AG04450 (cell line): ENCODE measurements at regions of chr1 and their contacts with region 1.

Region 1: DNA sequence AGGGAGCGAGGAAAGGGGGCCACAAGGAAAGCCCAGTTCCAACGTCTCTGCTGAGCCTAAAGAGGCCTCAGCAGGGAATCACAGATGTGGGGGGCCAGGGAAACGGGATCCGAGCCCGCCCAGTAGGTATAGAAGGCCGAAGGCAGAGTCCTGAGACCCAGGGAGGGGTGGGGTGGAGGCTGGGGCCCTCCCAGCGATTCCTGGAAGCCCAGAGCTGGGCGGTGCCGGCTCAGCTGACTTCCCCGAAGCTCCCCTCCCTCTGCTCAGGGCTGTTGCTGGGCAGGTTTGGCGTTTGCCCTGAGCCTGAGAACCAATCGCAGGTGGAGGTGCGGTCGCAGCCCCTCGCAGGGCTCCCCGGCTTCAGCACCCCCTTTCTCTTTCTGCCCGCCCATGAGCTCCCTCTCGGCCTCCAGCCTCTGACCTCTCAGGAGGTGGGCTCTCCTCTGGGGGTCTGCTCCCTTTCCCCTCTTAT is 12.8 kb downstream of the ADAMTSL4 start:
- DNase-seq: peak; percentile 81
- H3K4me3 ChIP-seq: peak overlapping the region; percentile 67
- H3K27ac ChIP-seq: peak overlapping the region; percentile 100
- H3K27me3 ChIP-seq: no peaks in the 10 kb centered on the region
- CTCF ChIP-seq: no peak

Region 2: GRCh38 chr1:150376110-150376509 is 185.9 kb before region 1 on chr1:
- CTCF ChIA-PET with region 1: no interaction called
- POLR2A ChIA-PET with region 1: no interaction called
- DNase-seq: no peak
- H3K4me3 ChIP-seq: no peak overlapping the region
- H3K27ac ChIP-seq: no peak overlapping the region
- H3K27me3 ChIP-seq: no peaks in the 10 kb centered on the region
- CTCF ChIP-seq: no peak

Region 3: GRCh38 chr1:150537732-150538684 is 24.0 kb before region 1 on chr1:
- CTCF ChIA-PET with region 1: interaction called, 39 read pairs
- POLR2A ChIA-PET with region 1: no interaction called
- DNase-seq: peak; percentile 42
- H3K4me3 ChIP-seq: no peak overlapping the region
- H3K27ac ChIP-seq: peak overlapping the region; percentile 73
- H3K27me3 ChIP-seq: no peaks in the 10 kb centered on the region
- CTCF ChIP-seq: no peak

Region 4: DNA sequence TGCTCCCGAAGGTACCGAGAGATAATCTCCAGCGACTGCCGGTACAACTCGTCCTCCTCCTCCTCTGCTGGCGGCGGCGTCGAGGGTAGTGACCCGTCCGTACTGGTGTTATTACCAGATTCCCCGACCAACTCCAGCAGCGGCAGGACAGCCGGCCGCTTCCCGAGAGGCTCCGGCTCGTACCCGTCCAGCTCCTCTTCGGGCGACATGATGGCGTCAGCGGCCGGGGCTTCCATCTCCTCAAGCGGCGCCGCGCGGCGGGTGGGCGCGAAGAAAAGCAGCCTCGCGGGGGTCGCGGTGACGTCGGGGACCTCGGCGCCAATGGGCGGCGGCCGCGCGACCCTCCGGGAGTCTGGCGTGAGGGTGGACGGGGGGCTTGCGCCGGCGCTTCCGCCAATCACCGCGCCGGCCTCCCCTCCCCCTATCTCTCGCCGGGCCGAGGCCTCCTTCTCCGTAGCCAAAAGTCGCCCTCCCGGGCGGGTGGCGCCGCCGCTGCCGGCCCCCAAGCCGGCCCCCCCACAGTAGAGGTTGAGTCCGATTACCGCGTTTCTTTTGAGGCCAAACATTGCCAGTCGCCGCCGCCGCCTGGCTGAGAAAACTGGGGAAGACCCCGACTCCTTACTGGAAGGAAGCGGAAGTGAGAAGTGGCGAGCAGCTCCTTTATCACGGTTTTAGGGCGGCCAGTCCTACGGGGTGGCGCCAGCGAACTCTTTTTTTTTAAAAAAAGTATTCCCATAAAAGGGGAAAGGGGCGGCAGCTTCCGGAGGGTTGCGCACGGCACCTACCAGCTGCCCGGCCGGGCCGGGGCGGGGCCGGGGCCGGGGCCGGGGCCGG is 17.2 kb after region 1 on chr1 and contains the start of gene MCL1:
- CTCF ChIA-PET with region 1: interaction called, 59 read pairs
- POLR2A ChIA-PET with region 1: interaction called, 130 read pairs
- DNase-seq: peak; percentile 91
- H3K4me3 ChIP-seq: peak within 1 kb of the TSS; percentile 97
- H3K27ac ChIP-seq: peak within 1 kb of the TSS; percentile 95
- H3K27me3 ChIP-seq: no peaks in the 10 kb centered on the region
- CTCF ChIP-seq: no peak
- polyA plus RNA-seq, gene MCL1: 107 and 138 TPM in 2 replicates

Region 5: DNA sequence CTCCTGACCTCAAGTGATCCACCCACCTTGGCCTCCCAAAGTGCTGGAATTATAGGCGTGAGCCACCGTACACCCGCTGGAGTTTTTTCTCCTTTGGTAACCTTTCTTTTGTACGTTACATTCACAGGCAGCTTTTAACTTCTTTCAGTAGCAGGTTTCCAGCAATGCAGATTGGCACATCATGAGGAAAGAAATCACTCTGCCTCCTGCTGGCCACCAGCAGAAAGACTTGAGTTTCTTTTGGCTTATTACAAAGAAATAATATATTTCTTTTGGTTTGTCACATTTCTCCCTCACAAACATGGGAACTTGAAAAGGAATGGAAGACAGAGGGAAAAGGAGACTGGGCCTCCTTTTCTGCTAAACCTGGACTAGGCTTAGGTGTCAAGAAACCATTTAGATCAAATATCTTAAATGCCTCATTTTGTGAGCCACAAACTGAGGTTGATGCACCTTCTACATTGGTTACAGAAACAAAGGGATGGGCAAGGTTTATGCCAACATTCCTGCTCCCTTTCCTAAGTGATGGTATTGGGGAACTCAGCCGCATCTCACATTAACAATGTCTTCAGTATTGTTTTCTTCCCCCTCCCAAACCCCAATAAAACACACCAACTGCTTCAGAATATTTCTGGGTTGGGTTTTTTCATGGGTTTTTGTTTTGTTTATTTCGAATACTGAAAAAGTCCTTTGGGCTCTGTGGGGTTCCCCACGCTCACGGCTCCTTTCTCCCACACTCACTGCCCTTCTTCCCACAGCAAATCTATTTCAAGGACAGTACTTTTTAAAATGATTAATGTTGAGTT is 59.7 kb after region 1 on chr1:
- CTCF ChIA-PET with region 1: interaction called, 104 read pairs
- POLR2A ChIA-PET with region 1: interaction called, 15 read pairs
- DNase-seq: no peak
- H3K4me3 ChIP-seq: no peak overlapping the region
- H3K27ac ChIP-seq: no peak overlapping the region
- H3K27me3 ChIP-seq: no peaks in the 10 kb centered on the region
- CTCF ChIP-seq: peak; percentile 75

Region 6: GRCh38 chr1:150808121-150808520 is 246.1 kb after region 1 on chr1 and contains the start of gene CTSK:
- CTCF ChIA-PET with region 1: interaction called, 20 read pairs
- POLR2A ChIA-PET with region 1: interaction called, 5 read pairs
- DNase-seq: no peak
- H3K4me3 ChIP-seq: peak within 1 kb of the TSS; percentile 29
- H3K27ac ChIP-seq: no peak within 1 kb of the TSS
- H3K27me3 ChIP-seq: no peaks in the 10 kb centered on the region
- CTCF ChIP-seq: no peak
- polyA plus RNA-seq, gene CTSK: 65.4 and 72.5 TPM in 2 replicates

Region 7: GRCh38 chr1:151006327-151007052 is 444.5 kb after region 1 on chr1 and contains the start of gene MINDY1:
- CTCF ChIA-PET with region 1: interaction called, 11 read pairs
- POLR2A ChIA-PET with region 1: interaction called, 5 read pairs
- DNase-seq: peak; percentile 63
- H3K4me3 ChIP-seq: peak within 1 kb of the TSS; percentile 70
- H3K27ac ChIP-seq: peak within 1 kb of the TSS; percentile 66
- H3K27me3 ChIP-seq: no peaks in the 10 kb centered on the region
- CTCF ChIP-seq: peak; percentile 72
- polyA plus RNA-seq, gene MINDY1: 12.8 and 18.0 TPM in 2 replicates